Mammary epithelial cell (primary cell): ENCODE measurements at regions of chr10 and their contacts with region 1.

Region 1: DNA sequence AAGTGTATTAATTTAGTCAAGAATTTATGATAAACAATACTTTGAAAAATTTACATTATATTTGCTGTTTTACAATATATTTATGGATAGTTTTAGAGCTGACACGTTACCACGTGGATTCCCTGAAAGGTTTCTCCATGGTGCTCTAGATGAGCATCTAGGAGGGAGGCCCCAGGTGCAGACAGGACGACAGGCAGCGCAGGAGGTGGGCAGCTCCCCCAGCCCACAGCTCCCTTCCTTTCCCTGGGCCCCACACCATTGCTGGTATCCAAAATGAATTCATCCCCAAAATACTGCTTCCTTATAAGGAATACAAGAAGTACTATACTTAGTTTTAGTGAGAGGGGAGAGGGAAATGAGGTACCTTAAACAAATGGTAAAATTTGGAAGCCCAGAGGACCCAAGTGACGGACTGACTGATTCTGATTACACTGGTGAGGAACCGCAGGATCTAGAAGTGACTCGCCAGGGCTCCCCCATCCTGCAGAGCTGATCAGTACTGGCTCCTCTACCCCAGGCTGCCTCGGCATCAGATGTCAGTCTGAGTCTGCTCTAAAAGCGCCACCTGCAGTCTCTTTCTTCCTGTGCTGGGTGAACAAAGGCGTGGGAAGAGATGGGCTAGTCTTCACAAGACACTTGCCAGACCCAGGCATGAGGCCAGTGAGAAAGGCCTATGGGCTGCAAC is 89.2 kb downstream of the DLG5 start:
- DNase-seq: peak; percentile 62
- H3K4me3 ChIP-seq: no peak overlapping the region
- H3K27ac ChIP-seq: no peak overlapping the region
- H3K4me1 ChIP-seq: peaks cover 10% of the 10 kb centered on the region
- H3K27me3 ChIP-seq: no peaks in the 10 kb centered on the region
- CTCF ChIP-seq: peak; percentile 30 to 45

Region 2: DNA sequence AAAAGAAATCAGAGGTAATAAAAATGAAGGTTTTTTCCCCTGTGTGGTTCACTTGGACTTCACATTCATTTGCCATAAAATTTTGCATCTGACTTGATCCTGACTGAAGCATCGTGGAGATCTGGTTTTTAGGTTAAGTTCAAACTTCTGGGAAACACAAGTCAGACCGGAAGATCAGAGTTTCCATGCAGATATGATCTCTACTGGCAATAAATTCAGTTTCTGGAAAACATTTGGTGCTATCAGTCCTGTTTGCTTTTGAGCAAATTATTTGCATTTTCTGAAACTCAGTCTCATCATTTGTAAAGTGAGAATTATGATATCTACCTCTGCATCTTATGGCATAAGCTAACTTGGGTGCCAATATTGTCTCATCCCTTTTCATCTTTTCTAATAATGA is 118.4 kb before region 1 on chr10:
- CTCF ChIA-PET with region 1: interaction called, 3 read pairs
- dilution Hi-C with region 1: no loop called
- in situ Hi-C with region 1: no loop called
- intact Hi-C with region 1: loop called (anchors 1 kb)
- DNase-seq: no peak
- H3K4me3 ChIP-seq: no peak overlapping the region
- H3K27ac ChIP-seq: no peak overlapping the region
- H3K4me1 ChIP-seq: peaks cover 9% of the 10 kb centered on the region
- H3K27me3 ChIP-seq: no peaks in the 10 kb centered on the region
- CTCF ChIP-seq: no peak

Region 3: DNA sequence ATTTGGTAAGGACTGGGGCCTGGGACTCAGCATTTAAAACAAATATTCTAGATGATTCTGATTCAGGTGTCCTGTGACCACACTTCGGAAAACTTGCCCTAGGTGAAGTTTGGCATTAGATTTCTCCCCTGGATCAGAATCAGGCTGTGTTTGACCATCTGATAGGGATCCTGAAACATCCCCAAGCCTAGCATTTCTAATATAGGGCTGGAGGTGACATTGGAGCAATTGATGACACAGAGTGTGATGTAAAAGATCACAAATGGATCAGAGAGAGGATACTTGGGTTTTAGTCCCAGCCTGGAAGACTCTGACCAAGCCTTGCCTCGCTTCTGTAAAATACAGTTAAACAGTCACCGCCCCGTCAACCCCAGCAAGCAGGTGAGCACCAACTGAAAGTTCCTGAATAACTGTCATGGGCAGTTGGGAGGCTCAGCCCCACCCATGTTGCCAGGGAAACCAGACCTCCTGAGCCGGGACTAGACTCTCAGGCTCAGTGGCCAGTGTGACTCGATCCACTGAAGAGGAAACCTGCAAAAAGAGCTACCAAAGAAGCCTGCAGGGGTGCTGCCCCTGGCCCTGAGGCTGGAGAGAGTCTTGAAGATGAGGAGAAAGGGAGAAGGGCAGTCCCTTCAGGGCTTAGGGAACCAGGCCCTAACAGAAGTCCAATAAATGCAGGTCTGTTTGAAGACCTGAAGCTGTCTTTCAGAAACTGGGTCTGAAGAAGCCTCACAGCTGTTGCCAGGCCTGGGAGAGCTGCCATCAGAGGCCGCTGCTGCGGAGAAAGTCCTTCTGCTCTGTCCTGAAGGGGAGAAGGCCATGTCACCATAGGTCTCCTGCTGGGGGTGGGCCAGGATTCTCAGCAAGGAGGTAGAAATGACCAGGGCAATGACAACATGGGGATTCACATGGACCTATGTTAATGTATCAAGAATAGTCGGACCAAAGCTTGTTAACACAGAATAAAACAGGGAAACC is 73.6 kb before region 1 on chr10:
- CTCF ChIA-PET with region 1: no interaction called
- dilution Hi-C with region 1: loop called (anchors 5 kb)
- in situ Hi-C with region 1: no loop called
- intact Hi-C with region 1: no loop called
- DNase-seq: no peak
- H3K4me3 ChIP-seq: no peak overlapping the region
- H3K27ac ChIP-seq: no peak overlapping the region
- H3K4me1 ChIP-seq: no peaks in the 10 kb centered on the region
- H3K27me3 ChIP-seq: no peaks in the 10 kb centered on the region
- CTCF ChIP-seq: no peak

Region 4: DNA sequence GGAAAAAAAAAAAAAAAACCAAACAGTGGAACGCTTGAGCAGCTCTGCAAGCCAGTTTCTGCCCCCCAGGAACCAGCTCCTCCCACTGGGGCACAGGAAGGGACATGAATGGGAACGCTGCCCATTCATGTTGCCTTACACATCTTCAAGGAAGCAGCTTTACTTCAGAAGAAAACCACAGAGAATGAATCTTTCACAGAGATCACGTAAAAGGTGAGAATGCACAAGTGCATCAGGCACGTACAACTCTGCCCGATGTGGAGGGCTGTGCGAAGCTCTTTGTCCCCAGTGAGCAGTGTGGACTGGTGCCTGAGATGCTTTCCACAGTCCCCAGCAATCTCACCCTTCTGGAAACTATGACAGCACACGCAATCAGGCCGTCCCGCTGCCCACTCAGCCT is 17.0 kb before region 1 on chr10:
- CTCF ChIA-PET with region 1: interaction called, 13 read pairs
- dilution Hi-C with region 1: no loop called
- in situ Hi-C with region 1: no loop called
- intact Hi-C with region 1: no loop called
- DNase-seq: peak; percentile 88
- H3K4me3 ChIP-seq: no peak overlapping the region
- H3K27ac ChIP-seq: peak overlapping the region; percentile 69
- H3K4me1 ChIP-seq: peaks cover 30% of the 10 kb centered on the region
- H3K27me3 ChIP-seq: no peaks in the 10 kb centered on the region
- CTCF ChIP-seq: no peak